Heart left ventricle (tissue), 16 donors: ENCODE measurements at regions of chr2 and their contacts with region 1.

Region 1: GRCh38 chr2:127953128-127953718 is 67.5 kb upstream of the AMMECR1L start:
- DNase-seq: peak in 4 of 5 donors; percentile 59 to 82 (median 67)
- ATAC-seq: peak; percentile 97 to 99 (median 98)
- H3K4me3 ChIP-seq: no peak overlapping the region
- H3K27ac ChIP-seq: peak overlapping the region in 10 of 12 donors; percentile 37 to 71 (median 52)
- H3K4me1 ChIP-seq: peaks cover 0 to 26% (median 14%) of the 10 kb centered on the region in 12 donors
- H3K27me3 ChIP-seq: no peaks in the 10 kb centered on the region
- CTCF ChIP-seq: no peak
- POLR2A ChIP-seq: no peak

Region 2: GRCh38 chr2:127891811-127892210 is 61.4 kb before region 1 on chr2:
- intact Hi-C with region 1: loop called in 1 of 10 experiments (anchors 5 kb)
- DNase-seq: no peak
- ATAC-seq: no peak
- H3K4me3 ChIP-seq: no peak overlapping the region
- H3K27ac ChIP-seq: no peak overlapping the region
- H3K4me1 ChIP-seq: peaks cover 0 to 17% (median 13%) of the 10 kb centered on the region in 12 donors
- H3K27me3 ChIP-seq: no peaks in the 10 kb centered on the region
- CTCF ChIP-seq: no peak
- POLR2A ChIP-seq: no peak

Region 3: GRCh38 chr2:127901339-127902056 is 51.7 kb before region 1 on chr2:
- intact Hi-C with region 1: loop called in 1 of 10 experiments (anchors 5 kb)
- DNase-seq: peak; percentile 70 to 83 (median 75)
- ATAC-seq: peak; percentile 91 to 97 (median 94)
- H3K4me3 ChIP-seq: peak overlapping the region in 3 of 12 donors; percentile 7 to 20 (median 7)
- H3K27ac ChIP-seq: peak overlapping the region in 10 of 12 donors; percentile 43 to 75 (median 68)
- H3K4me1 ChIP-seq: peaks cover 0 to 8% (median 4%) of the 10 kb centered on the region in 12 donors
- H3K27me3 ChIP-seq: peaks cover 0 to 9% (median 0%) of the 10 kb centered on the region in 9 donors
- CTCF ChIP-seq: no peak
- POLR2A ChIP-seq: no peak